Endothelial cell of umbilical vein (primary cell): ENCODE measurements at regions of chr17 and their contacts with region 1.

Region 1: GRCh38 chr17:50478391-50479381 is at the start of gene RSAD1:
- DNase-seq: peak; percentile 88
- H3K4me3 ChIP-seq: peak within 1 kb of the TSS; percentile 58 to 85 (median 79)
- H3K27ac ChIP-seq: peak within 1 kb of the TSS; percentile 39
- H3K4me1 ChIP-seq: peaks cover 20% of the 10 kb centered on the region
- H3K27me3 ChIP-seq: peaks cover 7 to 17% of the 10 kb centered on the region in 2 experiments
- CTCF ChIP-seq: peak; percentile 77 to 88
- POLR2A ChIP-seq: peak; percentile 94
- total RNA-seq, gene RSAD1: 33.1 and 35.5 TPM in 2 replicates

Region 2: GRCh38 chr17:50269477-50270434 is 208.9 kb before region 1 on chr17:
- CTCF ChIA-PET with region 1: no interaction called
- POLR2A ChIA-PET with region 1: no interaction called
- dilution Hi-C with region 1: no loop called
- intact Hi-C with region 1: no loop called
- DNase-seq: peak; percentile 51
- H3K4me3 ChIP-seq: no peak overlapping the region
- H3K27ac ChIP-seq: no peak overlapping the region
- H3K4me1 ChIP-seq: peaks cover 9% of the 10 kb centered on the region
- H3K27me3 ChIP-seq: peaks cover 3 to 6% of the 10 kb centered on the region in 2 experiments
- CTCF ChIP-seq: peak; percentile 83 to 84
- POLR2A ChIP-seq: no peak

Region 3: GRCh38 chr17:50372758-50373556 is 105.7 kb before region 1 on chr17 and contains the starts of genes EME1 and MRPL27:
- CTCF ChIA-PET with region 1: no interaction called
- POLR2A ChIA-PET with region 1: no interaction called
- dilution Hi-C with region 1: no loop called
- intact Hi-C with region 1: no loop called
- DNase-seq: peak; percentile 93
- H3K4me3 ChIP-seq: peak within 1 kb of the TSS; percentile 80 to 100 (median 91)
- H3K27ac ChIP-seq: peak within 1 kb of the TSS; percentile 89
- H3K4me1 ChIP-seq: peaks cover 15% of the 10 kb centered on the region
- H3K27me3 ChIP-seq: no peaks in the 10 kb centered on the region
- CTCF ChIP-seq: no peak
- POLR2A ChIP-seq: peak; percentile 89
- total RNA-seq, gene EME1: 7.3 and 9.1 TPM in 2 replicates
- total RNA-seq, gene MRPL27: 72.2 and 76.2 TPM in 2 replicates

Region 4: GRCh38 chr17:50397111-50397918 is 81.4 kb before region 1 on chr17 and contains the start of gene LRRC59:
- CTCF ChIA-PET with region 1: interaction called, 44 read pairs
- POLR2A ChIA-PET with region 1: interaction called, 8 read pairs
- dilution Hi-C with region 1: no loop called
- intact Hi-C with region 1: loop called (anchors 1 kb)
- DNase-seq: peak; percentile 88
- H3K4me3 ChIP-seq: peak within 1 kb of the TSS; percentile 39 to 89 (median 67)
- H3K27ac ChIP-seq: peak within 1 kb of the TSS; percentile 63
- H3K4me1 ChIP-seq: peaks cover 21% of the 10 kb centered on the region
- H3K27me3 ChIP-seq: no peaks in the 10 kb centered on the region
- CTCF ChIP-seq: peak; percentile 99 to 100
- POLR2A ChIP-seq: peak; percentile 81
- total RNA-seq, gene LRRC59: 179 and 183 TPM in 2 replicates

Region 5: GRCh38 chr17:50458701-50459676 is 19.7 kb before region 1 on chr17:
- CTCF ChIA-PET with region 1: no interaction called
- POLR2A ChIA-PET with region 1: no interaction called
- dilution Hi-C with region 1: no loop called
- intact Hi-C with region 1: no loop called
- DNase-seq: no peak
- H3K4me3 ChIP-seq: no peak overlapping the region
- H3K27ac ChIP-seq: no peak overlapping the region
- H3K4me1 ChIP-seq: no peaks in the 10 kb centered on the region
- H3K27me3 ChIP-seq: no peaks in the 10 kb centered on the region
- CTCF ChIP-seq: no peak
- POLR2A ChIP-seq: no peak

Region 6: DNA sequence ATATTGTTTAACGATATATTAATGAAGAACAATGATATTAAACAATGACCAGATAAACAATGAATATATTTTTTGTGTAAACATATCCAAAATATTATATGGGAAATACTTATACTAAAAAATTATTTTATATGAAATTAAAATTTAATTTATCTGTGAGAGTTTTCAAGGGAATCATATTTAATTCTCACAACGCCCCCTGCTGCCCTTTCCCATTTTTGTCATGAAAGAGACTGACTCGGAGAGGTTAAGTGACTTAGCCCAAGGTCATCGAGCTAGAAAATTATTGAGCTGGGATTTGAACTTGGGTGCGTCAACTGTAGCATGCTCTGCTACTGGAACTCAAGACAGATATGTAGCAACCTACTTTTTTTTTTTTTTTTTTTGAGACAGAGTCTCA is 22.4 kb after region 1 on chr17:
- CTCF ChIA-PET with region 1: interaction called, 28 read pairs
- POLR2A ChIA-PET with region 1: no interaction called
- dilution Hi-C with region 1: no loop called
- intact Hi-C with region 1: loop called (anchors 1 kb)
- DNase-seq: peak; percentile 42
- H3K4me3 ChIP-seq: no peak overlapping the region
- H3K27ac ChIP-seq: no peak overlapping the region
- H3K4me1 ChIP-seq: no peaks in the 10 kb centered on the region
- H3K27me3 ChIP-seq: peaks cover 3 to 6% of the 10 kb centered on the region in 2 experiments
- CTCF ChIP-seq: peak; percentile 28 to 29
- POLR2A ChIP-seq: no peak

Region 7: GRCh38 chr17:50681263-50682210 is 202.9 kb after region 1 on chr17:
- CTCF ChIA-PET with region 1: no interaction called
- POLR2A ChIA-PET with region 1: no interaction called
- dilution Hi-C with region 1: no loop called
- intact Hi-C with region 1: loop called (anchors 1 kb)
- DNase-seq: peak; percentile 83
- H3K4me3 ChIP-seq: no peak overlapping the region
- H3K27ac ChIP-seq: no peak overlapping the region
- H3K4me1 ChIP-seq: peaks cover 3% of the 10 kb centered on the region
- H3K27me3 ChIP-seq: no peaks in the 10 kb centered on the region
- CTCF ChIP-seq: peak; percentile 71 to 77
- POLR2A ChIP-seq: no peak

Region 8: DNA sequence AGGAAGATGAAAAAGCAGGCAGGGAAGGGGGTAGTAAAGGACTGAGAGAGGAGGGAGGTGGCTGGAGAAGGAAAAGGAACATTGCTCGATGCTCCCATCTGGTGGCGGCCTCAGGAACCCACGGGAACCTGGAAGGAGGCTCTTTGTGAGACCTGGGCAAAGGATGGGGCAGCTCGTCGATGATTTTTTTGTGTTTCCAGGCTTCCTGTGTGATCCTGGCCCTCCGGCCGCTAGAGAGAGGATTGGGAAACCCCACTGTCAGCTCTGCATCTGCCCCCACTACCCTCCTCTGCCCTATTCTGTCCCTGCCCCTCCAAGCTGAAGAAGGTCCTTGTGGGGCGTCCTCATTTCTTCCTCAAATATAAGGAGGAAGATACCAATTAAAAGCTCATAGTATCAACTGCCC is 363.3 kb after region 1 on chr17:
- CTCF ChIA-PET with region 1: interaction called, 3 read pairs
- POLR2A ChIA-PET with region 1: no interaction called
- dilution Hi-C with region 1: no loop called
- intact Hi-C with region 1: loop called (anchors 1 kb)
- DNase-seq: peak; percentile 58
- H3K4me3 ChIP-seq: no peak overlapping the region
- H3K27ac ChIP-seq: no peak overlapping the region
- H3K4me1 ChIP-seq: no peaks in the 10 kb centered on the region
- H3K27me3 ChIP-seq: no peaks in the 10 kb centered on the region
- CTCF ChIP-seq: peak; percentile 79 to 90
- POLR2A ChIP-seq: no peak